Dendritic cell treated with granulocyte-macrophage colony-stimulating factor and Interleukin-4, amounts not matched to agents 40 ng/mL and 50 ng/mL, for 4 days (primary cell): ENCODE measurements at regions of chr1 and their contacts with region 1.

Region 1: DNA sequence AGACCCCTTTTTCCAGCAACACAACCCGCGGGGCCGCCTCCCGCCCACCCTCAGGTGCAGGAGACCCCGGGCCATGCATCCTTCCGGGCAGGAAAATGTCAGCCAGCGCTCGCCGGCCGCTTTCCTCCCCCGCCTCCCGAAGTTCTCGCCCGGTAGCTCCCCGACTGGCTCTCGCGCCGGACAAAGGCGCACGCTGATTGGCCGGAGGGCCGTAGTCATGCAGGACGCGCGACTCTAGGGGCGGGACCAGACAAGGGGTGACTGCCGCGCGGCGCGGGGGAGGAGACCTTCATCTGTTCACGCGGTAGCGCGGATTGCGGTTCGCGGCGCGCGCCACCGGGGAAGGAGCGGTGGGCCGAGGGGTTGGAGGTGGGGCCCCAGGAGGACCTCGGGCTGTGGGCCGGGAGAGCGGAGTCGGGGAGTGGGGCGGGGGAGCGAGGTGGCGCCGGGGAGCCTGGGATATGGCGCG is at the start of gene FLVCR1:
- H3K4me3 Mint-ChIP-seq: peak within 1 kb of the TSS; percentile 99
- H3K27ac Mint-ChIP-seq: peak within 1 kb of the TSS; percentile 96
- H3K4me1 Mint-ChIP-seq: peaks cover 17% of the 10 kb centered on the region
- H3K27me3 Mint-ChIP-seq: no peaks in the 10 kb centered on the region

Region 2: DNA sequence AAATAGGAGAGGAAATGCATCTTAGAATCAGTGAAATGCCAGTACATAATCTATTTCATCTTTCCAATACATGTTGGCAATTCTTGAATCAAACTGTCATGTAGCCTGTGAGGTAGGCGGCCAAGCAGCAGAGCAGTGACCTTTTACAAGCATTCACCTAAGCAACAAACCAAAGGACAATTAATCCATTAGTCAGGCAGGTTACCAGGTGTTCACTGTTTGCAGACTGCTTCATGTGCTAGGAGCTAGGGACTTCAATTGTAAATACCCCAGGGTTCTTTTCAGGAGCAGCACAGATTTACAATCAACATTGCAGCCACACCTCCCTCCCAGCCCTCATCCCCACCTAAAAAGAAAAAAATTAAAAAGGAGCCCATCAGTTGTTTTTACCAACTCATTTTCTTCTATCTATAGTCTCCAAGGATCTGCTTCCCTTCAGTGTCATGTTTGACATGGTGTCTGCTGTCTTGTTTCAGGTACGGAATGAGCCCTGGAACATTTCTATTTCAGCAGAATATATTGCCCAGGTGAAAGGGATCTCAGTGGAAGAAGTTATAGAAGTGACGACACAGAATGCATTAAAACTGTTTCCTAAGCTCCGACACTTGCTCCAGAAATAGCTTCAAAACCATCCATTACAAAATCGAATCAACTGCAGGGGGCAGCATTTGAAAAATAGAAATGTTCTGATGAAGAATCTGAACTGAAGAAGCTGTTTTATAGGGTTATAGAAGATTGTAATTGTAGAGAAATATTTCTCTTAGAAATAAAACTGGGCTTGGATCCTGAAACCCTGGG is 43.3 kb before region 1 on chr1:
- intact Hi-C with region 1: loop called (anchors 5 kb)
- H3K4me3 Mint-ChIP-seq: no peak overlapping the region
- H3K27ac Mint-ChIP-seq: no peak overlapping the region
- H3K4me1 Mint-ChIP-seq: peaks cover 10% of the 10 kb centered on the region
- H3K27me3 Mint-ChIP-seq: no peaks in the 10 kb centered on the region

Region 3: GRCh38 chr1:212945463-212946160 is 87.6 kb after region 1 on chr1:
- intact Hi-C with region 1: loop called (anchors 5 kb)
- H3K4me3 Mint-ChIP-seq: no peak overlapping the region
- H3K27ac Mint-ChIP-seq: no peak overlapping the region
- H3K4me1 Mint-ChIP-seq: peaks cover 43% of the 10 kb centered on the region
- H3K27me3 Mint-ChIP-seq: peaks cover 31% of the 10 kb centered on the region

Region 4: GRCh38 chr1:213015099-213016050 is 157.3 kb after region 1 on chr1 and contains the start of gene ANGEL2:
- intact Hi-C with region 1: loop called (anchors 1 kb)
- H3K4me3 Mint-ChIP-seq: peak within 1 kb of the TSS; percentile 98
- H3K27ac Mint-ChIP-seq: peak within 1 kb of the TSS; percentile 98
- H3K4me1 Mint-ChIP-seq: peaks cover 21% of the 10 kb centered on the region
- H3K27me3 Mint-ChIP-seq: no peaks in the 10 kb centered on the region